Natural killer cell (primary cell): ENCODE measurements at regions of chr4 and their contacts with region 1.

Region 1: DNA sequence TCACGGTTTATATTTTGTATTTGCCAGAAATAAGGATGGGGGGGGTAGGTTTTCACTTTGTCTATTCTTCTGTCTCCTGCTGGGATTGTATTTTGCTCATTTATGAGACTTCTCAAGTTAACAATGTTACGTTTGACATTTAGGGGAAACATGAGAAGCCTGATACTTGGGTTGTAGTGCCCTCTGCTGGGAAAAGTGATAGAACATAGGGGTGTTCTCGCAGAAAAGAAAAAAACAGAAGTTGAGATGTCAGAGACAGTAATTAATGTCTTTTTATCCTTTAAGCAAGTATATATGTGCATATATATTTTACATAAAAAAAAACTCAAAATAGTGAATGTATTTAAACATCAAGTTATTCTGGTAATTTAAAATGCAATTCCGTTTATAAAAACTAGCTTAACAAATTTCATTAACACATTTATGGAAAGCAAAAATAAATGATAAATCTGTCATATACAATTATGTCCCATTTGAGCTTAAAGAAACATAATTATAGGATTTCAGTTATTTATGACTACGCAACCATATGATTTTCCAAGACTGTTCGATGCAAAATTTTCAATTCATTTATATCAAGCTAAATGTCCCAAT is 46.0 kb upstream of the TMPRSS11F start:
- DNase-seq: peak in 1 of 2 donors; percentile 55
- ATAC-seq: peak; percentile 46 to 62 (median 57)
- H3K4me3 ChIP-seq: no peak overlapping the region
- H3K4me3 Mint-ChIP-seq: no peak overlapping the region
- H3K27ac ChIP-seq: no peak overlapping the region
- H3K27ac Mint-ChIP-seq: no peak overlapping the region
- H3K4me1 ChIP-seq: no peaks in the 10 kb centered on the region
- H3K4me1 Mint-ChIP-seq: no peaks in the 10 kb centered on the region
- H3K27me3 ChIP-seq: no peaks in the 10 kb centered on the region
- H3K27me3 Mint-ChIP-seq: peaks cover 4 to 14% of the 10 kb centered on the region in 2 donors
- CTCF ChIP-seq: peak; percentile 71

Region 2: GRCh38 chr4:67437974-67438713 is 737.5 kb before region 1 on chr4:
- intact Hi-C with region 1: no loop called
- DNase-seq: no peak
- ATAC-seq: no peak
- H3K4me3 ChIP-seq: no peak overlapping the region
- H3K4me3 Mint-ChIP-seq: no peak overlapping the region
- H3K27ac ChIP-seq: no peak overlapping the region
- H3K27ac Mint-ChIP-seq: peak overlapping the region in 1 of 2 donors; percentile 19
- H3K4me1 ChIP-seq: no peaks in the 10 kb centered on the region
- H3K4me1 Mint-ChIP-seq: peaks cover 6 to 27% of the 10 kb centered on the region in 2 donors
- H3K27me3 ChIP-seq: no peaks in the 10 kb centered on the region
- H3K27me3 Mint-ChIP-seq: no peaks in the 10 kb centered on the region
- CTCF ChIP-seq: no peak

Region 3: DNA sequence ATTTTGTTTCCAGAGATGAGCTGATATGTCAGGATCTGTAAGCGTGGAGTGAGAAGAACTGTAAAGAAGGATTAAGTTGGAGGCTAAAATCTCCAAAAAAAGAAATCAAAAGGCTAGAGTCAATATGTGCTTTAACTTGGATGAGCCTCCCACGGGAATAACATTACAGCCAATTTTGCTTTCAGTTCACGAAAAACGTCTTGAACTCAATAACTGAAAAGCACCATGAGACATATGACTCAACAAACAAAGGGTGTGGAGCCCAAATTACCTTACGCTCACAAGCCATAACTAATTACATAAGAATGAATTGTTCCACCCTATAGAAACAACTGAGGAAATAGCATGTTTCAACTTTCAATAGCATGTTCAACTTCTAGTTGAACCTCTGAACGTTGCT is 314.1 kb before region 1 on chr4:
- intact Hi-C with region 1: no loop called
- DNase-seq: no peak
- ATAC-seq: no peak
- H3K4me3 ChIP-seq: no peak overlapping the region
- H3K4me3 Mint-ChIP-seq: no peak overlapping the region
- H3K27ac ChIP-seq: no peak overlapping the region
- H3K27ac Mint-ChIP-seq: no peak overlapping the region
- H3K4me1 ChIP-seq: no peaks in the 10 kb centered on the region
- H3K4me1 Mint-ChIP-seq: no peaks in the 10 kb centered on the region
- H3K27me3 ChIP-seq: no peaks in the 10 kb centered on the region
- H3K27me3 Mint-ChIP-seq: peaks cover 18 to 20% of the 10 kb centered on the region in 2 donors
- CTCF ChIP-seq: no peak

Region 4: DNA sequence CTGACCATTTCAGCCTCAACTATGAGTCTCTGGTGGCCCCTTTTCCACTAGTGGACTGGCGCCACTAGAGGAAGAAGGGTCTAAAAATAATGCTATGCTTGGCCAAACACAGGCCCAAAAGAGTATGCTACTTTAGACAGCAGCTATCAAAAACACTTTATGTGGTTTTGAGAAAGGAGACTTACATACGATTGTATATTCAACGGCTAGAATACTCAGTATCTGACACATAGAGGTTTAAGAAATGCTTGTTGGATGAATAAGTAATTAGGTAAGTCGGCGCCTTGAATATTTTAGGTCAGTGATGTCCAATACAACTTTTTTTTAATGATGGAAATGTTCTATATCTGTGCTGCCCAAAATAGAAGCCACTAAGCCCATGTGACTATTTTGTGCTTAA is 186.7 kb before region 1 on chr4:
- intact Hi-C with region 1: loop called (anchors 2 kb)
- DNase-seq: no peak
- ATAC-seq: no peak
- H3K4me3 ChIP-seq: no peak overlapping the region
- H3K4me3 Mint-ChIP-seq: no peak overlapping the region
- H3K27ac ChIP-seq: no peak overlapping the region
- H3K27ac Mint-ChIP-seq: no peak overlapping the region
- H3K4me1 ChIP-seq: no peaks in the 10 kb centered on the region
- H3K4me1 Mint-ChIP-seq: no peaks in the 10 kb centered on the region
- H3K27me3 ChIP-seq: no peaks in the 10 kb centered on the region
- H3K27me3 Mint-ChIP-seq: peaks cover 0 to 8% of the 10 kb centered on the region in 2 donors
- CTCF ChIP-seq: no peak